Activated CD8-positive, alpha-beta memory T cell treated with anti-CD3 and anti-CD28 coated beads, Interleukin-2, amount 10 ng/mL, durations not matched to agents 7 days and 5 days (primary cell): ENCODE measurements at regions of chr9 and their contacts with region 1.

Region 1: DNA sequence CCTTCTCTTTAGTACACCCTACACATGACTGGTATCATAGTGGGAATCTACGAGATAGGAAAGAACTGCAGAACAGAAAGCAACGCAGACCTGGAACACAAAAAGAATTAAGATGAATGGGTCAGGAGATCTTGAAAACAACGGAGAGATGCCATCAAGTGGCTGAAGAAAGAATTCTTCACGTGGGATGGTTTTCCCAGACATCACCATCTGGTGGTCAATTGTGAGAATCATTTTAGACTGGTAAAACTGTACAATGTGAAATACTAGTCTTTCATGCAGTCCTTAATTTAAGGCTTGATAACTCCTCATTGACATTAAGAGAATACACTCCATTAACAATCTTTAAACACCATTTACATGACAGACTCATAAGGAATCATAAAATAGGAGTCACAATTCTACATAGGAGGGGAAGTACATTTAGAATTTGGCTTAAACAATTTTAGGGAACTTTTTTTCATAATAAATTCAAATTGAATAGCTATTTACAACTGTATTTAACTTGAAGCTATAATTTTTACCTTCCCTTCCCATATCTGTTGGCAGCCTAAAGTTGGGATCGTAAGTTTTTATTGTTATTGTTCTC is 128.4 kb upstream of the TRPM3 start:
- DNase-seq: no peak
- ATAC-seq: no peak
- H3K4me3 Mint-ChIP-seq: no peak overlapping the region
- H3K27ac Mint-ChIP-seq: no peak overlapping the region
- H3K4me1 Mint-ChIP-seq: no peaks in the 10 kb centered on the region
- H3K27me3 Mint-ChIP-seq: peaks cover 12% of the 10 kb centered on the region

Region 2: DNA sequence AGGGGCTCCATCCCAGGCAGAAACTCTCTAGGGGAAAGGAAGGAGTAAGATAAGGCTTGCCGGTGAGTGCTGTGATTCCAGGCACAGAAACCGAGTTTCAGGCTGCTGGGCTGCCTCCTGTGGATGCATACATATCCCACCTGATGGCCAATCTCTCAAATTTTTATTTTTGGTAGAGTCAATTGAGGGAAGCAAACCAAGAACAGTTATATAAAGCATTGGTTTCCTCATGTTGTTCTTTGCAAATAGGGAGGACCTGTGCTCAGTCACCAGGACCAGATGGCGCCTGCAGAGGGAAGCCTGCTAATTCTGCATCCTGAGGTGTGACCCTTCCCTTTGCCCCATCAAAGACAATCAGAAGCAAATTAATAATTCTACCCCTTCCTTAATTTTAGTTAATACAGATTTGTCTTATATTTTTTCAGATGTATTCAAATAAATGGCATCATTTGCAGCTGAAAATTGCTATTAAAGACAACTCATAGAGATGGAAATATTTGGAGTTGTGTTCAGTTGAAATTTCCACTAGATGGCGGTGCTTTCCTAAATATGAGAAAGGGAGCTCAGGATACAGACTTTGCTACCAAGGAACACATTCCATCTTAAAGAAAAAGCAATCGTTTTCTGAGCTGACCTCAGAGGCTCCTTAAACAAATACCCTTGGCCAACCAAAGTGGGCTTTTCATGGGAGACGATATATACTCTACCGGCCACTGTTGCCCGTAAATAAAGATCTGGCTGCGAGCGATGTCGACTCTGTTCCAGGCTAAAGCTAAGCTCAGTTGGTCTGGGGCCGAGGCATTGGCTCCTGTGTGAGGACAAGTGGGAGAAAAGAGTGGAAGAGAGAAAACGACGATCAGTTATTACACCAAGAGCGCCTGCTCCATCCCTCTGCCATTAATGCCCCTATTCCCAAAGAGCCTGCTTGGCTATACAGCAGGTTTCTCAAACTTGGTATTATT is 609.7 kb before region 1 on chr9:
- CTCF ChIA-PET with region 1: interaction called, 20 read pairs
- DNase-seq: no peak
- ATAC-seq: no peak
- H3K4me3 Mint-ChIP-seq: no peak overlapping the region
- H3K27ac Mint-ChIP-seq: no peak overlapping the region
- H3K4me1 Mint-ChIP-seq: no peaks in the 10 kb centered on the region
- H3K27me3 Mint-ChIP-seq: peaks cover 8% of the 10 kb centered on the region

Region 3: DNA sequence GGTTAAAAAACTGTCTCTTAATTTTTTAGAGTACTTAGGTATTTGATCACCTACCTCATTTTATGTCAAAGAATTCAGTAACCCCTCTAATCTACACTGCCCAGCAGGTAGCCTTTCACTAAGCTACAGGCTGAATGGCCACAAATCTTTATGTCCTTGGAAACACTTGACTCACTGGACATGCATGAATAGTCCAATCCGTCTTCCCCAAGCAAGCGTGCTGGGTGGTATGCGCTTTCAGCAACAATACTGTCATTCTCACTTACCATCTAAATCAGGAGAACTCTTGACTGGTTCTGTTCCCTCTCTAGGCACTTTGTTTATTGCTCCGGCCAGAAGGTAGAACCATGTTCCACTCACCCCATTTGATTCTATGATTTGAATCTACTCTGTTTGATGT is 201.5 kb before region 1 on chr9:
- CTCF ChIA-PET with region 1: no interaction called
- DNase-seq: no peak
- ATAC-seq: no peak
- H3K4me3 Mint-ChIP-seq: no peak overlapping the region
- H3K27ac Mint-ChIP-seq: no peak overlapping the region
- H3K4me1 Mint-ChIP-seq: no peaks in the 10 kb centered on the region
- H3K27me3 Mint-ChIP-seq: no peaks in the 10 kb centered on the region

Region 4: DNA sequence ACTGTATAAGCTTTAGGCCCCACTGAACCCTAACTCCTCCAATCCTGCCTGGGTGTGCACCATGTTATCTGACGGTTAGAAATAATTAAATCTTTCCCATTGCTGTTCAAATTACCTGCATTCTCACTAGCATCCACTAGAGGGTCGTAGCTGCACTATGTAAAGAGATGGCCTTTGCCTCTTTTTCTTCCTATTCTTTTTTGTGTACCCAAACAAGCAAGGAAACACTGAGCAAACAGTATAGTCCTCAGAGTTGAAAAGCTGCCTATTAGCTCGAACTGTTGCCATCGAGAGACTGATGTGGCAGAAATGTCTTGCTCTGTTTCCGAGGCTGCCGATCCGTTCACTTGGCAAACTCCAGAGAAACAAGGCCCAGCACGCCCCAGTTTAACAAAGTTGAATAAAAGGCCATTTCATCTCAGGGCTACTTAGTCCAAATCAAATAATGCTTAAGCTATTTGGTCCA is 35.4 kb after region 1 on chr9:
- CTCF ChIA-PET with region 1: no interaction called
- DNase-seq: peak; percentile 45
- ATAC-seq: peak; percentile 47
- H3K4me3 Mint-ChIP-seq: no peak overlapping the region
- H3K27ac Mint-ChIP-seq: no peak overlapping the region
- H3K4me1 Mint-ChIP-seq: no peaks in the 10 kb centered on the region
- H3K27me3 Mint-ChIP-seq: peaks cover 7% of the 10 kb centered on the region